Pancreas (tissue), 10 donors: ENCODE measurements at regions of chr11 and their contacts with region 1.

Region 1: GRCh38 chr11:77187776-77188632 is 60.0 kb downstream of the MYO7A start:
- DNase-seq: peak; percentile 65 to 92 (median 84)
- ATAC-seq: peak; percentile 66 to 83 (median 78)
- H3K4me3 ChIP-seq: no peak overlapping the region
- H3K27ac ChIP-seq: no peak overlapping the region
- H3K4me1 ChIP-seq: no peaks in the 10 kb centered on the region
- H3K27me3 ChIP-seq: no peaks in the 10 kb centered on the region
- CTCF ChIP-seq: peak; percentile 83 to 88 (median 86)

Region 2: DNA sequence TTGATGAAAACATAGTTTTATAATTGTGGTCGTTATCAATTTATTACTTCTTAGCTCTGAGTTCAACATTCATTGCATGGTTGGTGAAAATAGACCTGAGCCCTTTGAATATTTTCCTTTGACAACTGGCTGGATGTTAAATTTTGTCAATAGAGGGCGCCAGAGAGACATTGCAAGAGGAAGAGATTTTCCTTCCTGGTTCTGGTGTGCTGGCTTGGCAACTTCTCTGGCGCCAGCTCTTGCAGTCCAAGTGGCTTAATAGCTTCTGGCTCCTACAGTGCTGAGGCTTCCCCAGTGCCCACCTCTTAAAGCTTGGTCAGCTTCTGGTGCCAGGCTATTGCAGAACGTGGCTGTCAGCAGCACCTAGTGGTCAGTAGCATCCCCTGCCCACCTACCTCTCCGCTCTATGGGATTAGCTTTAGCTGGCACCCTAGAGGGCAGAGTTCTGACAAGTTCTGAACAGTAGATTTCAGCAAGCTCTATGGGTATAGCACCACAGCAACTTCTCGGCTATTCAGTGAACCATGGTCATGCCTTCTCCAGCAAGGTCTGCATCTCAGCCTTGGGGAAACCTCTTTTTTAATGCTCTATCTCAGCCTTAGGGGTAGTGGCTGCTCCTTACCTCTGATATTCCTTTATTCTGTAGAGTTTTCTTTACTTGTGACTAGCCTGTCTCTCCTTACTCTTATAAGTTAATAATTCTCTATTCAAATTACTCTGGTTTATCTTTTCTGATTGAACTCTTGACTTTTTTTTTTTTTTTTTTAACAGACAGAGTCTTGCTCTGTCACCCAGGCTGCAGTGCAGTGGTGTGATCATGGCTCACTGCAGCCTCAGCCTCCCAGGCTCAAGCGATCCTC is 267.9 kb before region 1 on chr11:
- intact Hi-C with region 1: no loop called
- DNase-seq: peak; percentile 66 to 84 (median 76)
- ATAC-seq: peak; percentile 92 to 95 (median 92)
- H3K4me3 ChIP-seq: peak overlapping the region in 1 of 4 donors; percentile 22
- H3K27ac ChIP-seq: peak overlapping the region in 2 of 4 donors; percentile 30 to 37
- H3K4me1 ChIP-seq: peaks cover 7 to 37% (median 17%) of the 10 kb centered on the region in 3 donors
- H3K27me3 ChIP-seq: no peaks in the 10 kb centered on the region
- CTCF ChIP-seq: peak; percentile 71 to 93 (median 88)

Region 3: DNA sequence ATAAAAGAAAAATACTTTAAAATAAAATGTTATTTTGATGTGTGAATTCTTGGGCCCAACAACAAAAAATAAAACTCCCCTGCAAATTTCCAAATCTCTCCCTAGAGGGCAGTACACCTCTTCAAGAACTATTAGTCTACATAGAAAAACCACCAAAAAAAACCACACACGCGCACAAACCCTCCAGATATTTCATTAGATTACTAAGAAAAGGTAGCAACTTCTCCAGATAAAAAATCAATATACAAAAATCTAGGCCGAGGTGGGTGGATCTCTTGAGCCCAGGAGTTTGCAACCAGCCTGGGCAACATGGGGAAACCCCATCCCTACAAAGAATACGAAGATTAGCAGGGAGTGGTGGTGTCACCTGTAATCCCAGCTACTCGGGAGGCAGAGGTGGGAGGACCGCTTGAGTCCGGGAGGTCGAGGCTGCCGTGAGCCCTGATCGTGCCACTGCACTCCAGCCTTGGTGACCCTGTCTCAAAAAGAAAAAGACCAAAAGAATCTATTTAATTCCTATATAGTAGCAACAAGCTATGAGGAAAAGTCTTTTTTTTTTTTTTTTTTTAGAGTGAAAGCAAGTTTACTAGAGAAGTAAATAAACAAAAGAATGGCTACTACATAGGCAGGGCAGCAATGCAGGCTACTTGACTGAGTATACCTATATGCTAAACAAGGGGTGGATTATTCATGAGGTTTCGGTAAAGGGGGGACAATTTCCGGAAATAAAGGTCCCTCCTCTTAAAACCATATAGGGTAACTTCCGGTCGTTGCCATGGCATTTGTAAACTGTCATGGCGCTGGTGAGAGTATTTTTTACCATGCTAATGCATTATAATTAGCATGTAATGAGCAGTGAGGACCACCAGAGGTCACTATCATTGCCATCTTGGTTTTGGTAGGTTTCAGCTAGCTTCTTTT is 140.7 kb before region 1 on chr11:
- intact Hi-C with region 1: loop called in 1 of 3 experiments (anchors 10 kb)
- DNase-seq: peak in 3 of 6 donors; percentile 81 to 86 (median 84)
- ATAC-seq: peak; percentile 89 to 93 (median 90)
- H3K4me3 ChIP-seq: peak overlapping the region in 3 of 4 donors; percentile 20 to 44 (median 24)
- H3K27ac ChIP-seq: peak overlapping the region in 2 of 4 donors; percentile 50 to 76
- H3K4me1 ChIP-seq: no peaks in the 10 kb centered on the region
- H3K27me3 ChIP-seq: peaks cover 0 to 3% (median 0%) of the 10 kb centered on the region in 4 donors
- CTCF ChIP-seq: peak; percentile 59 to 73 (median 70)

Region 4: GRCh38 chr11:77062924-77063323 is 125.1 kb before region 1 on chr11:
- intact Hi-C with region 1: no loop called
- DNase-seq: no peak
- ATAC-seq: no peak
- H3K4me3 ChIP-seq: no peak overlapping the region
- H3K27ac ChIP-seq: peak overlapping the region in 3 of 4 donors; percentile 16 to 63 (median 39)
- H3K4me1 ChIP-seq: peaks cover 0 to 22% (median 0%) of the 10 kb centered on the region in 3 donors
- H3K27me3 ChIP-seq: no peaks in the 10 kb centered on the region
- CTCF ChIP-seq: no peak

Region 5: DNA sequence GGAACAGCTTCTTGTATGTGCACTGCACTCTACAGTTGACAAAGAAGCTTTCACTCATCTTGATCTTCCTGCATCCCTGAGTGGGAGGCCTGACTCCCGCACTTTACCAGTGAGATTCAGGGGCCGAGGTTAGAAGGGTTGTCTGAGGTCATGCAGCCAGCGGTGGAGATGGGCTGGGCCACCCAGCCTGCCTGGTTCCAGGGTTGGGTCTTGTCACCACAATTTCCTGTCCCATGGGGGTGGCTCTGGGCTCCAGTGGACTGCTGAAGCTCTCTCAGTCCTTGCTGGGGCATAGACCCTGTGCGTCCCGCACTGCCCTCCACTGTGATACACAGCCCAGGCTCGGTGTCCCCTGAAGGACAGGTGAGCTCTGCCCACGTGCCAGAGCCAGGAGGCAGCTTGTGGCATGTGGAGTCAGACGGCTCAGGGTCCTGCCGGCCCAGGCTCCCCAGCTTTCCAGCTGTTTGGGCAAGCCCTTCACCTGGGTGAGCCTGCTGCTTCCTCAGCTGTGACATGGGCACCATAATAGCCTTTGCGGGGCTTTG is 66.8 kb before region 1 on chr11:
- intact Hi-C with region 1: loop called in 1 of 3 experiments (anchors 5 kb)
- DNase-seq: peak in 1 of 6 donors; percentile 63
- ATAC-seq: no peak
- H3K4me3 ChIP-seq: no peak overlapping the region
- H3K27ac ChIP-seq: no peak overlapping the region
- H3K4me1 ChIP-seq: no peaks in the 10 kb centered on the region
- H3K27me3 ChIP-seq: no peaks in the 10 kb centered on the region
- CTCF ChIP-seq: no peak

Region 6: DNA sequence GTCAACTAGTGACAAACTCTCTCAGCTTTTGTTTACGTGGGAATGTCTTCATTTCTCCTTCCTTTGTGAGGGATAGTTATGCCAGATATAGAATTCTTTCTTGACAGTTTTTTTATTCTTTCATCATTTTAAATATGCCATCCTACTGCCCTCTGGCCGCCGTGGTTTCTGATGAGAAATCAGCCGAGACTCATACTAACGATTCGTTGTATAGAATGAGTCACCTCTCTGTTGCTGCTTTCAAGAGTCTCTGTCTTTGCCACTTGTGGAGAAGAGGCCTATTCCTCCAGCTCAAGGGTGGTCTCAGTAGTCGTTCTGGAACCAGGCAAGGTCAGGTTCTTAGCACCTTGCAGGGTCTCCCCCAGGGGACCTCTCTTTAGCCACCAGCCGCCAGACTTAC is 51.9 kb before region 1 on chr11:
- intact Hi-C with region 1: loop called in 1 of 3 experiments (anchors 5 kb)
- DNase-seq: no peak
- ATAC-seq: no peak
- H3K4me3 ChIP-seq: no peak overlapping the region
- H3K27ac ChIP-seq: no peak overlapping the region
- H3K4me1 ChIP-seq: peaks cover 0 to 13% (median 0%) of the 10 kb centered on the region in 3 donors
- H3K27me3 ChIP-seq: no peaks in the 10 kb centered on the region
- CTCF ChIP-seq: no peak

Region 7: DNA sequence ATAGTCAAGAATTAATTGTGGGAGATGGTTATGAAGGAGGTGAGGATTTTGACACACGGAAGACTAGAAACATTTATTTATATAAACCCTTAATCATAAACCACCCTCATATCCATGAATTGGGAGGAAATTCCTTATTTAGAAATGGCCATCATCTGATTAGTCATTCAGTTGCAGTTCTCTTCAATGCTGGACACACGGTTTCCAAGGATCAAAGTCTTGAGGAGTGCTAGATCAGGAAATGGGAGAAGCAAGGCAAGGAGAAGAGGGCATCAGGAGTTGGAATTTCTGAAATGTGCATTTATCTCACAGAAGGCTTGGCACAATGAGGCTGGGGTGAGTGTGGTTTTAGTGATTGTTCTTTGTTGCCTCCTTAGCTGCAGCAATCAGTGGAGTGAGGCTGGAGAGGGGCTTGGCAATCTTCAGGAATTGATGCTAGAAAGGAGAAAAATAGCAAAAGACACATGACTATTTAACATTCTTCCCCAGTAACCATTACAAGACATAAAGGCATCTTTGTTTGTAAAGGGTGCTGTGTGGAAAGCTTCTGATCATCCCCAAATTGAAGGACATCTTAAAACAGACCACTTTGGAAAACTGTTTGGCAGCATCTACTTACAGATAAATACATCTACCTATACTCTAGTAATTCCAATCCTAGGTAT is 135.1 kb after region 1 on chr11:
- intact Hi-C with region 1: no loop called
- DNase-seq: no peak
- ATAC-seq: peak in 3 of 4 donors; percentile 18 to 41 (median 19)
- H3K4me3 ChIP-seq: no peak overlapping the region
- H3K27ac ChIP-seq: no peak overlapping the region
- H3K4me1 ChIP-seq: no peaks in the 10 kb centered on the region
- H3K27me3 ChIP-seq: no peaks in the 10 kb centered on the region
- CTCF ChIP-seq: no peak

Region 8: DNA sequence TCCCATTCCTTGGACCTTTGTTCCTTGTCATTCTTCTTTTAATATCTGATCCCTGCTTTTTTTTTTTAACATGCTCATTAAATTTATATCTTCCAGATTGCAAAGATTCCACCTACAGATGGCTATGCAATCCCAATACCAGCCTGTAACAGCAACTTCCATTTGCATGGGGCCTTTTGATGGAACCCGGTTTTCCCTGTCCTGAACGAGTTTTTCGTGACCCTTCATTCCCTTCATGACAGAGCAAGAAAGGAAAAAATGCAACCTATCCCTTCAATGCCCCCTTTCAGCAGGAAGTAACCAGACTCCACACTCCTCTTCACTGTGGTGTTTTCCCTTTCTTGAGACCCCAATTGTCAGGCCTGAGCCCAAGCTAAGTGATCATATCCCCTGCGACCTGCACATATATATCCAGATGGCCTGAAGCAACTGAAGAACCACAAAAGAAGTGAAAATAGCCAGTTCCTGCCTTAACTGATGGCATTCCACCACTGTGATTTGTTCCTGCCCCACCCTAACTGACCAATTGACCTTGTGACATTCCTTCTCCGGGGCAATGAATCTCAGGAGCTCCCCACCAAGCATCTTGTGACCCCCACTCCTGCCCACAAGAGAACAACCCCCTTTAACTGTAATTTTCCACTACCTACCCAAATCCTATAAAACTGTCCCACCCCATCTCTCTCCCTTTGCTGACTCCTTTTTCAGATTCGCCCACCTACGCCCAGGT is 362.0 kb after region 1 on chr11:
- intact Hi-C with region 1: loop called in 1 of 3 experiments (anchors 5 kb)
- DNase-seq: no peak
- ATAC-seq: no peak
- H3K4me3 ChIP-seq: no peak overlapping the region
- H3K27ac ChIP-seq: no peak overlapping the region
- H3K4me1 ChIP-seq: no peaks in the 10 kb centered on the region
- H3K27me3 ChIP-seq: no peaks in the 10 kb centered on the region
- CTCF ChIP-seq: no peak

Region 9: GRCh38 chr11:77619576-77620198 is 431.7 kb after region 1 on chr11:
- intact Hi-C with region 1: loop called in 1 of 3 experiments (anchors 10 kb)
- DNase-seq: no peak
- ATAC-seq: peak in 3 of 4 donors; percentile 70 to 79 (median 71)
- H3K4me3 ChIP-seq: no peak overlapping the region
- H3K27ac ChIP-seq: no peak overlapping the region
- H3K4me1 ChIP-seq: no peaks in the 10 kb centered on the region
- H3K27me3 ChIP-seq: no peaks in the 10 kb centered on the region
- CTCF ChIP-seq: peak; percentile 31 to 65 (median 46)